ENCODE measurements at regions of chr2 and their contacts with region 1.

Region 1: GRCh38 chr2:129641371-129641770 is 338.1 kb upstream of the RAB6C start:
- DNase-seq: no peak
- H3K4me3 ChIP-seq: no peak overlapping the region
- CTCF ChIP-seq: no peak

Region 2: DNA sequence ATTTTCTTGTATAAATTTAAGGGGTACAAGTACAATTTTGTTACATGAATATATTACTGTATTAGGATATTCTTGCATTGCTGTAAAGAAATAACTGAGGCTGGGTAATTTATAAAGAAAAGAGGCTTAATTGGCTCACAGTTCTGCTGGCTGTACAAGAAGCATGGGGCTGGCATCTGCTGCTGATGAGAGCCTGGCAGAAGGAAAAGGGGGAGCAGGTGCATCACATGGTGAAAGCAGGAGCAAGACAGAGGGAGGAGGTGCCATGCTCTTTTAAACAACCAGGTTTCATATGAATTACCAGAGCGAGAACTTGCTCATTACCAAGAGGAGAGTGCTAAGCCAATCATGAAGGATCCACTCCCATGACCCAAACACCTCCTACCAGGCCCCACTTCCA is 61.4 kb before region 1 on chr2:
- in situ Hi-C with region 1: loop called (anchors 5 kb)
- DNase-seq: no peak
- H3K4me3 ChIP-seq: no peak overlapping the region
- CTCF ChIP-seq: no peak